HepG2 (cell line): ENCODE measurements at regions of chr16 and their contacts with region 1.

Region 1: DNA sequence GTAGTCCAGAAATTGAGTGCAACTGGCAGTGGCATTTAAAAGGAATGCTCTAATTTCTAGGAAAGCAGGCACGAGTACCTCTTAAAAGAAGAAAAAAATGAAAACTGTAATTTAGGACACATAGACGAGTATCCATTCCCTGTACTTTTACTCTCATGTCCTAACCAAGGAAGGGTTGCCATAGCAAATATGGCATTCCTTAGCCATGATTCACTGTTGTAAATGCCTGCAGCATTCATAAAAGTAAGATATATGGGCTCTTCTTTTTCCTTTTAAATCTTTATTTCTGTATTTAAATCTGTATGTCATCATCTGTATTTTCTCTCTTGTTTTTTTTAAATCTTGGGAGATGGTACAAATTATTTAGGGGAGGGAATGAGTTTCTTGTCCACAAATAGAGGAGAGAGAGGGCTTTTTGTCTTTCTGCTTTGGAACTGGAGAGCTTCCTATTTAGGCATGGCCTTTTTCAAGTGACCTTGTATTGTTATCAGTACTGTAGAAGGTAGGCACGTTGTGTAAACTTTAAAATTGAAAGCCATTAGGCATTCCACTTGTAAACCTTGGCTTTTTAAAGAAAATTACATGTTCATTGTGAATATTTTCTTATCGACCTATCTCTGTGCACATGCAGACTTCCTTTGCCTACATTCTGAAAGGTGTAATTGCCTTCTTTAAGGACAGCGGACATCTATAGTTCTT is 50.0 kb downstream of the TENT4B start:
- DNase-seq: peak; percentile 92
- ATAC-seq: peak; percentile 90
- H3K4me3 ChIP-seq: peak overlapping the region; percentile 6 to 53 (median 13)
- H3K27ac ChIP-seq: peak overlapping the region; percentile 89
- H3K4me1 ChIP-seq: peaks cover 74% of the 10 kb centered on the region
- H3K27me3 ChIP-seq: no peaks in the 10 kb centered on the region
- CTCF ChIP-seq: no peak
- EP300 ChIP-seq: peak; percentile 27 to 38; a peak in 1 of 4 replicates
- POLR2A ChIP-seq: no peak
- RAD21 ChIP-seq: no peak

Region 2: GRCh38 chr16:50152807-50153452 is 50.1 kb before region 1 on chr16 and contains the start of gene TENT4B:
- CTCF ChIA-PET with region 1: no interaction called
- POLR2A ChIA-PET with region 1: interaction called, 9 read pairs
- in situ Hi-C with region 1: loop called (anchors 10 kb)
- intact Hi-C with region 1: loop called (anchors 2 kb)
- DNase-seq: peak; percentile 62
- ATAC-seq: peak; percentile 68
- H3K4me3 ChIP-seq: peak within 1 kb of the TSS; percentile 98 to 100 (median 98)
- H3K27ac ChIP-seq: peak within 1 kb of the TSS; percentile 96
- H3K4me1 ChIP-seq: peaks cover 44% of the 10 kb centered on the region
- H3K27me3 ChIP-seq: no peaks in the 10 kb centered on the region; a peak in 1 of 5 replicates
- CTCF ChIP-seq: 0 out of 2 replicates have a peak, but pooled peaks have one; percentile 34
- EP300 ChIP-seq: no peak
- POLR2A ChIP-seq: peak; percentile 90 to 91
- RAD21 ChIP-seq: peak; percentile 57
- total RNA-seq, gene TENT4B: 32.8 and 36.0 TPM in 2 replicates

Region 3: GRCh38 chr16:50166511-50167500 is 36.3 kb before region 1 on chr16:
- CTCF ChIA-PET with region 1: no interaction called
- POLR2A ChIA-PET with region 1: interaction called, 3 read pairs
- in situ Hi-C with region 1: no loop called
- intact Hi-C with region 1: loop called (anchors 5 kb)
- DNase-seq: peak; percentile 50
- ATAC-seq: peak; percentile 80
- H3K4me3 ChIP-seq: no peak overlapping the region
- H3K27ac ChIP-seq: peak overlapping the region; percentile 43
- H3K4me1 ChIP-seq: peaks cover 81% of the 10 kb centered on the region
- H3K27me3 ChIP-seq: no peaks in the 10 kb centered on the region
- CTCF ChIP-seq: no peak
- EP300 ChIP-seq: no peak
- POLR2A ChIP-seq: no peak
- RAD21 ChIP-seq: no peak

Region 4: GRCh38 chr16:50213939-50214519 is 11.0 kb after region 1 on chr16:
- CTCF ChIA-PET with region 1: no interaction called
- POLR2A ChIA-PET with region 1: no interaction called
- in situ Hi-C with region 1: no loop called
- intact Hi-C with region 1: no loop called
- DNase-seq: peak; percentile 58
- ATAC-seq: no peak
- H3K4me3 ChIP-seq: no peak overlapping the region
- H3K27ac ChIP-seq: no peak overlapping the region
- H3K4me1 ChIP-seq: peaks cover 20% of the 10 kb centered on the region
- H3K27me3 ChIP-seq: no peaks in the 10 kb centered on the region
- CTCF ChIP-seq: peak; percentile 69
- EP300 ChIP-seq: no peak
- POLR2A ChIP-seq: no peak
- RAD21 ChIP-seq: no peak

Region 5: GRCh38 chr16:50245417-50246298 is 42.6 kb after region 1 on chr16:
- CTCF ChIA-PET with region 1: no interaction called
- POLR2A ChIA-PET with region 1: no interaction called
- in situ Hi-C with region 1: no loop called
- intact Hi-C with region 1: no loop called
- DNase-seq: peak; percentile 16
- ATAC-seq: peak; percentile 67
- H3K4me3 ChIP-seq: peak overlapping the region; percentile 79 to 85 (median 81)
- H3K27ac ChIP-seq: no peak overlapping the region
- H3K4me1 ChIP-seq: peaks cover 25% of the 10 kb centered on the region
- H3K27me3 ChIP-seq: peaks cover 0 to 29% of the 10 kb centered on the region in 2 experiments; a peak in 4 of 5 replicates
- CTCF ChIP-seq: peak; percentile 37; the same call in 1 of the 2 replicates
- EP300 ChIP-seq: no peak
- POLR2A ChIP-seq: no peak
- RAD21 ChIP-seq: peak; percentile 36; the same call in 1 of the 2 replicates